CD8-positive, alpha-beta T cell (primary cell): ENCODE measurements at regions of chr14 and their contacts with region 1.

Region 1: DNA sequence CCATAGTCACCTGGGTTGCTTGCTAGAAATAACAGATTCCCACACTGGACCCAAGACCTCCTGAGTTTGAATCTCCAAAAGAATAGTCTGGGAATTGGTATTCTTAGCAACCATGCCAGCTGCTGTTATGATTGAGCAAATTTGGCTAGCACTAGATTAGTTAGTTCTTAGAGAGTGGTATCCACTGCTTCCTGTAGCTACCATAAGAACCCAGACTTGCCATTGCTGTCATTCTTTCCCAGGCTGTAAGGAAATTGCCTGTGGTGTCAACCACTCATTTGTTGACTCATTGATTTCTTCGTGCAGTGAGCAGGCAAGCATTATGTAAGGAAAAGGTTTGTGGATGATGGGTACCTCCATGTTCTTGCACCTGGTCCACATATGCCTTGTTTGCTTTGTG is 201.8 kb upstream of the RGS6 start:
- DNase-seq: no peak
- ATAC-seq: no peak
- H3K4me3 ChIP-seq: no peak overlapping the region
- H3K4me3 Mint-ChIP-seq: no peak overlapping the region
- H3K27ac ChIP-seq: no peak overlapping the region
- H3K27ac Mint-ChIP-seq: no peak overlapping the region
- H3K4me1 ChIP-seq: no peaks in the 10 kb centered on the region
- H3K4me1 Mint-ChIP-seq: no peaks in the 10 kb centered on the region
- H3K27me3 ChIP-seq: no peaks in the 10 kb centered on the region
- H3K27me3 Mint-ChIP-seq: no peaks in the 10 kb centered on the region
- CTCF ChIP-seq: no peak

Region 2: GRCh38 chr14:71764701-71765382 is 34.4 kb after region 1 on chr14:
- CTCF ChIA-PET with region 1: no interaction called
- POLR2A ChIA-PET with region 1: no interaction called
- intact Hi-C with region 1: loop called in 1 of 2 experiments (anchors 2 kb)
- DNase-seq: no peak
- ATAC-seq: no peak
- H3K4me3 ChIP-seq: no peak overlapping the region
- H3K4me3 Mint-ChIP-seq: no peak overlapping the region
- H3K27ac ChIP-seq: no peak overlapping the region
- H3K27ac Mint-ChIP-seq: no peak overlapping the region
- H3K4me1 ChIP-seq: no peaks in the 10 kb centered on the region
- H3K4me1 Mint-ChIP-seq: no peaks in the 10 kb centered on the region
- H3K27me3 ChIP-seq: peaks cover 0 to 2% of the 10 kb centered on the region in 2 experiments
- H3K27me3 Mint-ChIP-seq: peaks cover 5% of the 10 kb centered on the region
- CTCF ChIP-seq: no peak

Region 3: GRCh38 chr14:71913342-71913741 is 182.9 kb after region 1 on chr14:
- CTCF ChIA-PET with region 1: no interaction called
- POLR2A ChIA-PET with region 1: no interaction called
- intact Hi-C with region 1: no loop called
- DNase-seq: no peak
- ATAC-seq: no peak
- H3K4me3 ChIP-seq: no peak overlapping the region
- H3K4me3 Mint-ChIP-seq: no peak overlapping the region
- H3K27ac ChIP-seq: no peak overlapping the region
- H3K27ac Mint-ChIP-seq: no peak overlapping the region
- H3K4me1 ChIP-seq: no peaks in the 10 kb centered on the region
- H3K4me1 Mint-ChIP-seq: no peaks in the 10 kb centered on the region
- H3K27me3 ChIP-seq: peaks cover 0 to 4% of the 10 kb centered on the region in 2 experiments
- H3K27me3 Mint-ChIP-seq: peaks cover 25% of the 10 kb centered on the region
- CTCF ChIP-seq: no peak